Activated naive CD4-positive, alpha-beta T cell treated with anti-CD3 and anti-CD28 coated beads for 36 hours (primary cell): ENCODE measurements at regions of chr1 and their contacts with region 1.

Region 1: DNA sequence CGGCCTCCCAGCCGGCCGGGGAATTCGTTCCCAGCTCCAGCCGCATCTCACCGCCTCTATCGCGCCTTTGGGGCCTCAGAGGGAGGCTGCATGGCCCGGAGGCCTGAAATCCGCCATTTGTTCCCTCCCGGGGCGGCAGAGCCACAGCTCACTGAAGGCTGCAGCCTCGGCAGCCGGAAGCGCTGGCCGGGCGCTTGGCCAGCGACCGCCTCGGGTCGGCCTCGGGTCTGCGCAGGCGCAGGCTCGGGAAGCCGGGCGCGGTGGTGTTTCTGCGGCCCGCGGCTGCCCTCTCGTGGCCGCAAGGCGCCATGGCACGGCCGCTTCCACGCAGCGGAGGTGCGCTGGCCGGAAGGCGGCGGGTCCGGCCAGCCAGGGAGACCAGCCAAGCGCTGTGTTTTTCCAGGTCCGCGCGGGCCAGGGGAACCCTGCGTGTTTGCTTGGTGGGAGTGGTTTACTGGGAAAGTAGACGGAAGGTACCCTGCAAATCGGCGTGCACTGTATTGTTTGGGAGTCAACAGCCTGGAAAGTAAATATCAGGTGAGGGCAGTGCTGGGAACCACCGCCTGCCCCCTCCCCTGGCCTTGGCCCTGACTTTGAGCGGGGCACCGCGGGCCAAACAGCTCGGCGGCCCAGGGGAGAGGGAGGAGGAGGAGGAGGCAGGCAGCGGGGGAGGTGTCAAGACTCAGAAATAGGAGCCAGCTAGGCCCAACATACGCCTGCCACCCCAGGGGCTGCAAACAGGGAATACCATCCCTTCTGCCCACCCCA is 52.7 kb upstream of the CD34 start:
- DNase-seq: peak; percentile 80
- H3K4me3 Mint-ChIP-seq: peak overlapping the region; percentile 81
- H3K27ac Mint-ChIP-seq: no peak overlapping the region
- H3K4me1 Mint-ChIP-seq: peaks cover 10% of the 10 kb centered on the region
- H3K27me3 Mint-ChIP-seq: peaks cover 27% of the 10 kb centered on the region

Region 2: GRCh38 chr1:207644852-207645634 is 318.6 kb before region 1 on chr1 and contains the start of gene CR1L:
- CTCF ChIA-PET with region 1: no interaction called
- intact Hi-C with region 1: no loop called
- DNase-seq: peak; percentile 85
- H3K4me3 Mint-ChIP-seq: peak within 1 kb of the TSS; percentile 72
- H3K27ac Mint-ChIP-seq: no peak within 1 kb of the TSS
- H3K4me1 Mint-ChIP-seq: peaks cover 7% of the 10 kb centered on the region
- H3K27me3 Mint-ChIP-seq: peaks cover 16% of the 10 kb centered on the region
- total RNA-seq, gene CR1L: not detected

Region 3: GRCh38 chr1:207698822-207699483 is 264.7 kb before region 1 on chr1:
- CTCF ChIA-PET with region 1: interaction called, 4 read pairs
- intact Hi-C with region 1: loop called (anchors 5 kb)
- DNase-seq: peak; percentile 73
- H3K4me3 Mint-ChIP-seq: no peak overlapping the region
- H3K27ac Mint-ChIP-seq: no peak overlapping the region
- H3K4me1 Mint-ChIP-seq: no peaks in the 10 kb centered on the region
- H3K27me3 Mint-ChIP-seq: no peaks in the 10 kb centered on the region

Region 4: DNA sequence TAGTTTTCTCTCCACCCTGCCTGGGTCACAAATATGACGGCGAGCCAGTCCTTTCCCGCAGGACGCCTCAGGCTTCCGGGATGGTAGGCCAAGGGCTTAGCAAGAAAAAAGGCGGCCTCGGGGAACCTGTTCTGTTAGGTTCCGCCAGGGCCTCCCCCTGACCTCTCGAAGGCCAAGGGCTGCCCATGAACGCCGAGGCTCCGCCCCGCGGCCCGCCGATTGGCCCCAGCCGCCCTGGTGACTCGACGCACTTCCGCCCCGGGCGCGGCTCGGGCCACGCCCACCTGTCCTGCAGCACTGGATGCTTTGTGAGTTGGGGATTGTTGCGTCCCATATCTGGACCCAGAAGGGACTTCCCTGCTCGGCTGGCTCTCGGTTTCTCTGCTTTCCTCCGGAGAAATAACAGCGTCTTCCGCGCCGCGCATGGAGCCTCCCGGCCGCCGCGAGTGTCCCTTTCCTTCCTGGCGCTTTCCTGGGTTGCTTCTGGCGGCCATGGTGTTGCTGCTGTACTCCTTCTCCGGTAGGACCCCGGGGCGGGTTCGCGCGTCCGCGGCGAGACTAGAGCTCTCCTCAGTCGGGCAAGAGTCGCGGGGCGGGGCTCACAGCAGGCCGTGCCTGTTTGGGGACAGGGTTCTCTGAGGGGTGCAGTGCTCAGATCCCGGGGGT is 211.7 kb before region 1 on chr1 and contains the start of gene CD46:
- CTCF ChIA-PET with region 1: no interaction called
- intact Hi-C with region 1: loop called (anchors 2 kb)
- DNase-seq: peak; percentile 97
- H3K4me3 Mint-ChIP-seq: peak within 1 kb of the TSS; percentile 92
- H3K27ac Mint-ChIP-seq: peak within 1 kb of the TSS; percentile 98
- H3K4me1 Mint-ChIP-seq: peaks cover 59% of the 10 kb centered on the region
- H3K27me3 Mint-ChIP-seq: no peaks in the 10 kb centered on the region
- total RNA-seq, gene CD46: 91.0 to 93.4 TPM

Region 5: GRCh38 chr1:207811920-207812720 is 151.5 kb before region 1 on chr1:
- CTCF ChIA-PET with region 1: interaction called, 13 read pairs
- intact Hi-C with region 1: no loop called
- DNase-seq: no peak
- H3K4me3 Mint-ChIP-seq: no peak overlapping the region
- H3K27ac Mint-ChIP-seq: peak overlapping the region; percentile 83
- H3K4me1 Mint-ChIP-seq: peaks cover 83% of the 10 kb centered on the region
- H3K27me3 Mint-ChIP-seq: no peaks in the 10 kb centered on the region

Region 6: GRCh38 chr1:207897188-207897587 is 66.4 kb before region 1 on chr1:
- CTCF ChIA-PET with region 1: interaction called, 22 read pairs
- intact Hi-C with region 1: loop called (anchors 2 kb)
- DNase-seq: no peak
- H3K4me3 Mint-ChIP-seq: no peak overlapping the region
- H3K27ac Mint-ChIP-seq: no peak overlapping the region
- H3K4me1 Mint-ChIP-seq: no peaks in the 10 kb centered on the region
- H3K27me3 Mint-ChIP-seq: peaks cover 4% of the 10 kb centered on the region